HCT116 (cell line): ENCODE measurements at regions of chr3 and their contacts with region 1.

Region 1: DNA sequence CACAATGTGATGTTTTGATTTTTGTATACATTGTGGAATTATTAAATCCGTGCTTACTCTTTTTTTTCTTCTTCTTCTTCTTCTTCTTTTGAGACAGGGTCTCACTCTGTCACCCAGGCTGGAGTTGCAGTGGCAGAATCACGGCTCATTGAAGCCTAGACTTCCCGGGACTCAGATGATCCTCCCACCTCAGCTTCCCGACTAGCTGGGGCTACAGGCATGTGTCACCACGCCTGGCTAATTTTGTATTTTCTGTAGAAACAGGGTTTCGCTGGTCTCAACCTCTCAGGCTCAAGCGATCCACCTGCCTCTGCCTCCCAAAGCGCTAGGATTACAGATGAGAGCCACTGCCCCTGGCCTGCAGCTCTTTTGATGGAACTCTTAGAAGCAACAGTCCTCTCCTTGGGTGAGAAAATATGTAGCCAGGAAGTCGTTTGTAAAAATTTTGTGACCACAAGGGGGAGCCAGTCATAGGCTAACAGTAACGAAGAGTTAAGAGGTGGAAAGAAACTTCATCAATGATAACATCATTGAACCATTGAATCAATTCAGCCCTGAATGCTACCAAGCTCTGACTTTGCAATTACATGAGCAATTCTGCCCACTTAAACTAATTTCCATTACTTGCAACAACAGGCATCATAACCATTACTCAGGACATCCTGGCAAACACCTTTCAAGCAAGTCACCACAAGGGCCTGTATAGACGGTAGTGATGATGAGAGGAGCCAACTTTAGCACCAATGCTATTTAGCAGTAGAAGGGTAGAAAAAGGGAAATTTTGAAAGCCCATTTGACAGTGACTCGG is 16.7 kb upstream of the CMTM7 start:
- DNase-seq: peak; percentile 63
- ATAC-seq: peak; percentile 87
- H3K4me3 ChIP-seq: no peak overlapping the region
- H3K27ac ChIP-seq: no peak overlapping the region
- H3K4me1 ChIP-seq: peaks cover 0 to 4% of the 10 kb centered on the region in 2 experiments; a peak in 1 of 4 replicates
- H3K27me3 ChIP-seq: no peaks in the 10 kb centered on the region
- CTCF ChIP-seq: peak; percentile 56 to 79 (median 78)
- POLR2A ChIP-seq: no peak
- RAD21 ChIP-seq: peak; percentile 72

Region 2: GRCh38 chr3:31331306-31331705 is 1043.7 kb before region 1 on chr3:
- CTCF ChIA-PET with region 1: no interaction called
- POLR2A ChIA-PET with region 1: no interaction called
- RAD21 ChIA-PET with region 1: no interaction called
- intact Hi-C with region 1: no loop called
- DNase-seq: no peak
- ATAC-seq: no peak
- H3K4me3 ChIP-seq: no peak overlapping the region
- H3K27ac ChIP-seq: no peak overlapping the region
- H3K4me1 ChIP-seq: no peaks in the 10 kb centered on the region
- H3K27me3 ChIP-seq: no peaks in the 10 kb centered on the region
- CTCF ChIP-seq: no peak
- POLR2A ChIP-seq: no peak
- RAD21 ChIP-seq: no peak

Region 3: GRCh38 chr3:32399030-32399620 is 24.1 kb after region 1 on chr3:
- CTCF ChIA-PET with region 1: interaction called, 5 read pairs
- POLR2A ChIA-PET with region 1: interaction called, 3 read pairs
- RAD21 ChIA-PET with region 1: no interaction called
- intact Hi-C with region 1: loop called (anchors 2 kb)
- DNase-seq: no peak
- ATAC-seq: peak; percentile 67
- H3K4me3 ChIP-seq: no peak overlapping the region
- H3K27ac ChIP-seq: no peak overlapping the region
- H3K4me1 ChIP-seq: peaks cover 3 to 40% of the 10 kb centered on the region in 2 experiments; a peak in 2 of 4 replicates
- H3K27me3 ChIP-seq: no peaks in the 10 kb centered on the region
- CTCF ChIP-seq: peak; percentile 45 to 84 (median 64); a peak in 4 of 6 replicates
- POLR2A ChIP-seq: no peak
- RAD21 ChIP-seq: peak; percentile 62

Region 4: GRCh38 chr3:32467333-32468070 is 92.5 kb after region 1 on chr3:
- CTCF ChIA-PET with region 1: interaction called, 39 read pairs
- POLR2A ChIA-PET with region 1: no interaction called
- RAD21 ChIA-PET with region 1: interaction called in 1 of 2 experiments, 8 read pairs
- intact Hi-C with region 1: loop called (anchors 2 kb)
- DNase-seq: no peak
- ATAC-seq: peak; percentile 66
- H3K4me3 ChIP-seq: no peak overlapping the region
- H3K27ac ChIP-seq: peak overlapping the region; percentile 24; the same call in 1 of the 2 replicates
- H3K4me1 ChIP-seq: peaks cover 39 to 53% of the 10 kb centered on the region in 2 experiments
- H3K27me3 ChIP-seq: no peaks in the 10 kb centered on the region
- CTCF ChIP-seq: peak; percentile 86 to 98 (median 91)
- POLR2A ChIP-seq: no peak
- RAD21 ChIP-seq: peak; percentile 96

Region 5: DNA sequence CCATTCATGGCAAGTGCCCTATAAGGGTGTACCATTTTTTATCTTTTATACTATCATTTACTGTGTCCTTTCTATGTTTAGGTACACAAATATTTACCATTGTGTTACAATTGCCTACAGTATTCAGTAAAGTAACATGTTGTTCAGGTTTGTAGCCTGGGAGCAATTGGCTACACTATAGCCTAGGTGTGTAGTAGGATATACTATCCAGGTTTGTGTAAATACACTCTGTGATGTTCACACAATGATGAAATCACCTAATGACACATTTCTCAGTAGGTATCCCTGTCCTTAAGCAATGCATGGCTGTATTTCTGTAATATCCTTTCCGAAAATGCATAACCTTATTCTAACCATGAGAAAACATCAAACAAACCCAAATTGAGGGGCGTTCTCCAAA is 292.1 kb after region 1 on chr3:
- CTCF ChIA-PET with region 1: interaction called, 12 read pairs
- POLR2A ChIA-PET with region 1: no interaction called
- RAD21 ChIA-PET with region 1: no interaction called
- intact Hi-C with region 1: loop called (anchors 1 kb)
- DNase-seq: no peak
- ATAC-seq: no peak
- H3K4me3 ChIP-seq: no peak overlapping the region
- H3K27ac ChIP-seq: no peak overlapping the region
- H3K4me1 ChIP-seq: no peaks in the 10 kb centered on the region
- H3K27me3 ChIP-seq: peaks cover 3% of the 10 kb centered on the region; the same call in 1 of the 2 replicates
- CTCF ChIP-seq: no peak
- POLR2A ChIP-seq: no peak
- RAD21 ChIP-seq: no peak